Left cardiac atrium (tissue), 4 donors: ENCODE measurements at regions of chr22 and their contacts with region 1.

Region 1: GRCh38 chr22:46079861-46080821 is 70.2 kb upstream of the PPARA start:
- DNase-seq: peak; percentile 86
- ATAC-seq: peak; percentile 56 to 61

Region 2: GRCh38 chr22:45977003-45977411 is 103.1 kb before region 1 on chr22 and contains the start of gene WNT7B:
- intact Hi-C with region 1: no loop called
- DNase-seq: no peak
- ATAC-seq: no peak
- total RNA-seq, gene WNT7B: not detected

Region 3: DNA sequence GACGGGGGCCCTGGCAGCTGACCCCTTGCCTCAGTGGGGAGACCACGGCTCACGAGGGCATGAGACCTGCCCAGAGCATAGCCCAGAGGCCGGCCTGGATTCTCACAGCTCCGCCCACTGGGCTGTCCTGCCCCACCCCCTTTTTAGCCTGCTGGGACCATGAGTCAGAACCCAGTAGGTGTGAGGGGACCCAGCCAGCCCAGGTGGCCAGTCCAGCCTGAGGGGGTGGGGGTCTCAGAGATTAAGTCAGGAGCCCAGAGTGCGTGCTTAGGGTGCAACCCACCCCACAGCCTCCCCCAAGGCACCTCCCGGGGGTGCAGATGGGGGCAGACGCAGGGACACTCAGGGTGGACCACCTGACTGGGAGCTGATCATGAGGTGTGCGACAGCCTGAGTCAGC is 30.1 kb after region 1 on chr22:
- intact Hi-C with region 1: loop called in 1 of 2 experiments (anchors 5 kb)
- DNase-seq: peak; percentile 65
- ATAC-seq: peak in 1 of 2 donors; percentile 18